ENCODE measurements at regions of chr18 and their contacts with region 1.

Region 1: DNA sequence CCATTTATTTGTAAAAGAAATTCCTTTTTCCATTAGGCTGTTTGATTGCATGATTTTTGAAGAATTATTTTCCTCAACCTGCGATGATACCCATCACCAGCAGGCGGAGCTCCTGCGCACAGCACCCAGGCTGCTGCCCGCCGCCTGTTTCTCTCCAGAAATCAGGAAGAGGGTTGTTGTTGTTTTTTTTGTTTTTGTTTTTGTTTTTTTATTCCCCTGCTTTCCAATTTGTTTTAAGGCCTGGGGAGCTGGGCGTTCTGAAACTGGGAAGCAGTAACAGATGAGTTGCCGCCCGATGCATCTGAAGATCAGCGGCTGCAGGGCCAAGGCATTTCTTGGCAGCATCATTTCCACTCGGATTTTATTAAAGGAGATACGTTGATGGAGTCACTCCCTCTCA is 132.1 kb downstream of the MBP start:
- DNase-seq: peak; percentile 32
- ATAC-seq: peak; percentile 86
- H3K4me3 ChIP-seq: no peak overlapping the region
- H3K27ac ChIP-seq: no peak overlapping the region
- H3K4me1 ChIP-seq: peaks cover 2% of the 10 kb centered on the region; the same call in 1 of the 2 replicates
- H3K27me3 ChIP-seq: no peaks in the 10 kb centered on the region; the same call in 1 of the 2 replicates
- CTCF ChIP-seq: peak; percentile 97
- POLR2A ChIP-seq: 0 out of 2 replicates have a peak, but pooled peaks have one; percentile 37
- RAD21 ChIP-seq: peak; percentile 97

Region 2: DNA sequence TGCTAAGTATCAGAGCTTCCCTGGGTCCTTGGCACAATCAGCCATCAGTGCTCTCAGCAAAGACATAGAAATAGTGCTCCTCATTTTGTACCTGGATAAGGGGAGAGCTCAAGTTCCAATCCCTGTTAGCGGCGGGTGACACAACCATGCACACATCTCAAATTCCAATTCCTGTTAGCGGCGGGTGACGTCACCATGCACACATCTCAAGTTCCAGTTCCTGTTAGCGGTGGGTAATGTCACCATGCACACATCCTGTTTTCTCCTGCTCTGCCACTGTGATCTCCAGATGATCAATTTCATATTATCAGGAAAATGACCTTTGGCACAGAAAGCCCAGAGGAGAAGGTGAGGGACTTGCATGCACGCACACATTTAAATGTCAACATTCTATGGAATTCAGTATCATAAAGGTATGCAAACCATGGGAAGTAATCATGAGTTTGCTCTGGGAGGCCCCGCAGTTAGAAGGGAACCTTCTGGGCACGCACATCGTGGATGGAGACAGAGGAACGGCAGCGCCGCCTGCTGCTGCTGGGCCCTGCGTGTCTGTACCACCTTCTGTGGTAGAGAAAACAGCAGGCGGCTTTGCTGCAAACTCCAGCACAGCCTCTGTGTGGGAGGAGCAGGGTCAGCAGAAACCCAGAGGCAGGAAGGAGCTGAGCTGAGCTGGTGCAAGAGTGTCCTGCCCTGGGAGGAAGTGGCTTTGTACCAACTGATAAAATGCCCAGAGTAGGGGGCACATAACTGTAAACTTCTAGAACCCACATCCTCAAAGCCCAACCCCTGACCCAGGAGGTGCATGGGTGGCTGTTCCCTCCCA is 54.3 kb after region 1 on chr18:
- CTCF ChIA-PET with region 1: interaction called, 6 read pairs
- POLR2A ChIA-PET with region 1: no interaction called
- dilution Hi-C with region 1: no loop called
- in situ Hi-C with region 1: no loop called
- intact Hi-C with region 1: loop called (anchors 1 kb)
- DNase-seq: peak; percentile 93
- ATAC-seq: peak; percentile 99
- H3K4me3 ChIP-seq: no peak overlapping the region; the same call in 1 of the 2 replicates
- H3K27ac ChIP-seq: peak overlapping the region; percentile 77
- H3K4me1 ChIP-seq: peaks cover 19% of the 10 kb centered on the region
- H3K27me3 ChIP-seq: no peaks in the 10 kb centered on the region
- CTCF ChIP-seq: peak; percentile 97
- POLR2A ChIP-seq: no peak
- RAD21 ChIP-seq: peak; percentile 82

Region 3: GRCh38 chr18:77067291-77068061 is 66.9 kb after region 1 on chr18:
- CTCF ChIA-PET with region 1: interaction called, 4 read pairs
- POLR2A ChIA-PET with region 1: no interaction called
- dilution Hi-C with region 1: no loop called
- in situ Hi-C with region 1: no loop called
- intact Hi-C with region 1: loop called (anchors 2 kb)
- DNase-seq: peak; percentile 96
- ATAC-seq: peak; percentile 73
- H3K4me3 ChIP-seq: no peak overlapping the region
- H3K27ac ChIP-seq: peak overlapping the region; percentile 64
- H3K4me1 ChIP-seq: peaks cover 46% of the 10 kb centered on the region
- H3K27me3 ChIP-seq: no peaks in the 10 kb centered on the region
- CTCF ChIP-seq: peak; percentile 1; the same call in 1 of the 2 replicates
- POLR2A ChIP-seq: no peak
- RAD21 ChIP-seq: no peak; the same call in 1 of the 2 replicates

Region 4: GRCh38 chr18:77108001-77108692 is 107.6 kb after region 1 on chr18:
- CTCF ChIA-PET with region 1: interaction called, 3 read pairs
- POLR2A ChIA-PET with region 1: no interaction called
- dilution Hi-C with region 1: no loop called
- in situ Hi-C with region 1: no loop called
- intact Hi-C with region 1: loop called (anchors 2 kb)
- DNase-seq: peak; percentile 92
- ATAC-seq: peak; percentile 93
- H3K4me3 ChIP-seq: peak overlapping the region; percentile 10; the same call in 1 of the 2 replicates
- H3K27ac ChIP-seq: peak overlapping the region; percentile 96
- H3K4me1 ChIP-seq: peaks cover 30% of the 10 kb centered on the region
- H3K27me3 ChIP-seq: no peaks in the 10 kb centered on the region
- CTCF ChIP-seq: no peak
- POLR2A ChIP-seq: no peak; the same call in 1 of the 2 replicates
- RAD21 ChIP-seq: 0 out of 2 replicates have a peak, but pooled peaks have one; percentile 12

Region 5: DNA sequence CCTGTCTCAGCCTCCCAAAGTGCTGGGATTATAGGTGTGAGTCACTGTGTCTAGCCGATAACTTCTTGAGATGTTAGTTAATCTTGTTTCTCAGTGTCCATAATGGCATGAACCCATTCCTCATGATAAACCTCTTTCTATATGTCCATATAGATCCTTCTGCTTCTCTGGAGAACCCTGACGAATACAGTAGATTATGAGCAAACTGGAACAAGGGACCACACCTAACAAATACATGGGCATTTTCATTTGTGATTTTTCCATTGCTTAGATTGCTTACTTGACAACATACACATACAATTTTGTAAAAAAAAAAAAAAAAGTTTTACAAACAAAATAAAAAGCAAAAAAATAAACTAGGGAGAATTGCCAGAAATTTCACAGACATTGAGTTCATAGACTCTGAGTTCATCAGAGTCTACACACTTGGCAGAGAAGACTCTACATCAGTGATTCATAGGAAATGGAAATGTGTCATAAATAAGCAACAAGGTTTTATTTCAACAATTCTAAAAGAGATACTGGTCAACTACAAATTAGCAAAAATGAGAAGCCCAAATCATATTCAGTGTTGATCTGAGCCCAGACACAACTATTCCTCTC is 345.8 kb after region 1 on chr18:
- CTCF ChIA-PET with region 1: no interaction called
- POLR2A ChIA-PET with region 1: no interaction called
- dilution Hi-C with region 1: no loop called
- in situ Hi-C with region 1: no loop called
- intact Hi-C with region 1: no loop called
- DNase-seq: no peak
- ATAC-seq: no peak
- H3K4me3 ChIP-seq: no peak overlapping the region
- H3K27ac ChIP-seq: no peak overlapping the region
- H3K4me1 ChIP-seq: no peaks in the 10 kb centered on the region
- H3K27me3 ChIP-seq: no peaks in the 10 kb centered on the region
- CTCF ChIP-seq: no peak
- POLR2A ChIP-seq: no peak
- RAD21 ChIP-seq: no peak

Region 6: DNA sequence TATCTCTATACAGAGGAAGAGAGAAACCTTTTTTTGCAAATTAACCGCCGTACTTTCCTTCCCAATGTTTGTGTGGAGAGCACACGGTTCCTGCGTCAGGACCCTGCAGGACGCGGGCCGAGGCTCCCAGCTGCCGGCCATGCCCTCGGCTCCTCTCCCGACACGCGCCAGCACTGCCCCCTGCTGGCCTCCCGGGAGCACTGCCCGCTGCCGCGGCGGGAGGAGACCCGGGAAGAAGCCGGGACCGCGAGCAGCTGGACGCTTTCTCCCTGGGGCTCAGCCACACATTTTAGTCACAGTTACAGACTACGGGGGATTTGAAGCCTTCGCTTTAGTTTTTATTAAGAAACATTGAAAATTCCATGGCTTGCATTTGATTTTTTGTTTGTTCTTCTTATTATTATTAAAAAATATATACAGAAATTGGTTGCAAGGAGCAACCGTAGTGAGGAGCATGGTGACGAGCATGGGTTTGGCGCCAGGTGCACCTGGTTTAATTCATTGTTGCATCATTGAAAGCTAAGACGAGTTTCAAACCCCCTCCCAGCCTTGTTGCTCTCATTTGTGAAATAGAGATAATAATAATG is 650.4 kb after region 1 on chr18:
- CTCF ChIA-PET with region 1: interaction called, 4 read pairs
- POLR2A ChIA-PET with region 1: no interaction called
- dilution Hi-C with region 1: no loop called
- in situ Hi-C with region 1: no loop called
- intact Hi-C with region 1: loop called (anchors 2 kb)
- DNase-seq: no peak
- ATAC-seq: peak; percentile 70
- H3K4me3 ChIP-seq: no peak overlapping the region
- H3K27ac ChIP-seq: no peak overlapping the region
- H3K4me1 ChIP-seq: no peaks in the 10 kb centered on the region
- H3K27me3 ChIP-seq: no peaks in the 10 kb centered on the region
- CTCF ChIP-seq: peak; percentile 30
- POLR2A ChIP-seq: no peak
- RAD21 ChIP-seq: peak; percentile 33; the same call in 1 of the 2 replicates